ENCODE measurements at regions of chr11 and their contacts with region 1.

Region 1: DNA sequence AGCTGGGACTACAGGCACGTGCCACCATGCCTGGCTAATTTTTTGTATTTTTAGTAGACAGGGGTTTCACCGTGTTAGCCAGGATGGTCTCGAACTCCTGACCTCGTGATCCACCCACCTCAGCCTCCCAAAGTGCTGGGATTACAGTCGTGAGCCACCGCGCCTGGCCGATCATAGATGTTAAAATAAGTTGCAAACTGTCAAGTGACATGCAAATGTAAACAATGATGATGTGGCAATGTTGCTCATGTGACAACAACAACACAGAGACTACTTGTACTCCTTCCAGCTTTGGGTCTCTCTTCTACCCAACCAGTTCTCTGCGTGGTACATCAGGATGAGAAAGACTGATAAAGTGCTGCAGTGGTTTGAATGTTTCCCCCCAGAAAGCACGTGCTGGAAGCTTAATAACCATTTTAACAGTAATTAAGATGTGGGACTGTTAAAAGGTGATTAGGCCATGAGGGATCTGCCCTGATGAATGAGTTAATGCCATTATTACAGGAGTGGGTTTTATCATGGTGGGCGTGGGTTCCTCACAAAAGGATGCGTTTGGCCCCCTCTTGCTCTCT is 93.9 kb downstream of the RELT start:
- DNase-seq: no peak
- ATAC-seq: peak in 1 of 4 donors; percentile 13
- H3K4me3 ChIP-seq: peak overlapping the region; percentile 50
- H3K27ac ChIP-seq: peak overlapping the region; percentile 81
- H3K4me1 ChIP-seq: peaks cover 56% of the 10 kb centered on the region
- H3K27me3 ChIP-seq: no peaks in the 10 kb centered on the region
- CTCF ChIP-seq: no peak

Region 2: DNA sequence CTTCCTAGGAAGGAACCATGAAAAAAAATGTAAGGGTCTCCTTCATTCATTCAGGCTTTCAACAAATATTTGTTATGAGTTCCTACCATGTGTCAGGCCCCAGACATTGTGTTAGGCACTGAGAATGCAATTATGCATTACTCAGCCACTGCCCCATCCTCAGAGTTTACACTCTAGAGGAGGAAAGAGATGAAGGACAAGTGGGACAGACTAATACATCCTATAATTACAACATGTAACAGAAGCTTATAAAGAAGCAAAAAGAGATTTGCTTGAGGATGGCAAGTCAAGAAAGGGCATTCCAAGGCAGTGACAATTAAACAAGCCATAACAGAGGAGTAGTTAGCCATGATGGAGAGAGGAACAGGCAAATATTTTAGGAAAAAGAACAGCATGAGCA is 49.1 kb after region 1 on chr11:
- intact Hi-C with region 1: loop called in 1 of 2 experiments (anchors 5 kb)
- DNase-seq: no peak
- ATAC-seq: no peak
- H3K4me3 ChIP-seq: no peak overlapping the region
- H3K27ac ChIP-seq: no peak overlapping the region
- H3K4me1 ChIP-seq: no peaks in the 10 kb centered on the region
- H3K27me3 ChIP-seq: no peaks in the 10 kb centered on the region
- CTCF ChIP-seq: no peak

Measured in psoas muscle (tissue), 8 donors.